ENCODE measurements at regions of chr5 and their contacts with region 1.

Region 1: GRCh38 chr5:54785729-54786591 is 199.4 kb downstream of the ESM1 start:
- DNase-seq: peak in 1 of 2 donors; percentile 66
- H3K4me3 ChIP-seq: no peak overlapping the region
- H3K27ac ChIP-seq: peak overlapping the region in 1 of 2 donors; percentile 43
- H3K4me1 ChIP-seq: no peaks in the 10 kb centered on the region
- H3K27me3 ChIP-seq: no peaks in the 10 kb centered on the region
- CTCF ChIP-seq: peak in 1 of 3 donors; percentile 19
- POLR2A ChIP-seq: no peak

Region 2: GRCh38 chr5:54567996-54568395 is 218.0 kb before region 1 on chr5:
- intact Hi-C with region 1: loop called (anchors 5 kb)
- DNase-seq: no peak
- H3K4me3 ChIP-seq: no peak overlapping the region
- H3K27ac ChIP-seq: no peak overlapping the region
- H3K4me1 ChIP-seq: peaks cover 0 to 5% of the 10 kb centered on the region in 2 donors
- H3K27me3 ChIP-seq: no peaks in the 10 kb centered on the region
- CTCF ChIP-seq: no peak
- POLR2A ChIP-seq: no peak

Region 3: DNA sequence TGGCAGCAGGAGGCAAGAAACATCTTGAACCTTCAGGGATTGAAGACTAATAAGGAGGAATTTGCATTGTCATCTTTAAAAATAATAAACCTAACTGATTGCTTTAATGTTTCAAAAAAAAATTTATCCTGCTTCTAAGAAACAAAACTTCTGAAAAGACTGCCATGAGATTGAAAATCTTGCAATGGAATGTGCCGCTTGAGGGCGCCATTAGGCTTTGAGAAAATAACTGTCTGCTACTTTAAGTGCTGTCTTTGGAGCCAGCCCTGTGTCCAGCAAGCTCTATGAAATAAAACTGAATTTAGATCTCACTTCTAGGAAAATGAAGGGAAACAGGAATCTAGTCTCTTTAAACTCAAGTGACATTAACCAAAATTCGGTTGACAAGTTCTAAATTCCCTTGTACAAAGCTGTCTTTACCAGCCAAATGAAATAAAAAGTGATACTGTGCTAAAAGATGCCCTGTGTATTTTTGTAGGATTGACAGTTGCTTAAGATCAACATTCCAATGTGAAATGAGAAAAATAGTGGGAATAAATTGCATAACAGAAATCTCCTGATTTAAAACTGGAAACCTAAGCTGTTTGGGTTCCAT is 120.1 kb after region 1 on chr5:
- intact Hi-C with region 1: no loop called
- DNase-seq: peak in 1 of 2 donors; percentile 30
- H3K4me3 ChIP-seq: no peak overlapping the region
- H3K27ac ChIP-seq: no peak overlapping the region
- H3K4me1 ChIP-seq: no peaks in the 10 kb centered on the region
- H3K27me3 ChIP-seq: peaks cover 0 to 5% of the 10 kb centered on the region in 2 donors
- CTCF ChIP-seq: peak in 2 of 3 donors; percentile 34 to 39
- POLR2A ChIP-seq: no peak

Measured in breast epithelium (tissue), 4 donors.